Pancreas (tissue), 10 donors: ENCODE measurements at regions of chr6 and their contacts with region 1.

Region 1: GRCh38 chr6:109187399-109188114 is 92.2 kb downstream of the CEP57L1 start:
- DNase-seq: peak in 5 of 6 donors; percentile 35 to 70 (median 56)
- ATAC-seq: peak; percentile 81 to 100 (median 98)
- H3K4me3 ChIP-seq: no peak overlapping the region
- H3K27ac ChIP-seq: no peak overlapping the region
- H3K4me1 ChIP-seq: peaks cover 0 to 13% (median under 1%) of the 10 kb centered on the region in 3 donors
- H3K27me3 ChIP-seq: no peaks in the 10 kb centered on the region
- CTCF ChIP-seq: peak; percentile 68 to 94 (median 80)

Region 2: DNA sequence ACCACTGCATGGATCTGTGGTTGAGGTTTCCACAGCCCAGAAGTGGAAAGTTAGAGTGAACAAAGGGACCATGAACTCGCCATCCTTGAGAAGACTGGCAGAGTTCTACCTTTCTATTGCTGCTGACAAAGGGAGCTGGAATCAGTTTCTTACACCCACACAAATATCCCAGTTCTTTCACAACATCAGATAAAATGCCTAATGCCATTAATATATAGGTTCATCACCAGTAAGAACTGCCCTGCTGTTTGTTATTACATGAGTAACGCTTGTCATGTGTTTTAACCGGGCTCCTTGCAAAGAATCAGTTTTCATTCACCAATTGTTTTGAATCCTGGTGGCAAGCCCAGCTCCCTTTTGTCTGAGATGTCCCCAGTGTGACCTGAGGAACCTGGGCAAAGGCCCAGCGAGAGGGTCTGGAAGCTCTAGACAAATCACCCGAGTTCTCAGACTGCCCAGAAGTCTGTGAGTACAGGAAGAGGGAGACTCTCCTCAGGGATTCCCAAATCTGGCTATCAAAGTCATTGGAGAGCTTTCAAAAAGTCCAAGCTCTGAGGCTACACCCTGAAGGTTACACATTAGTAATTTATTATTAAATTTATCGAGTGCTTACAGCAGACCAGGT is 202.2 kb after region 1 on chr6:
- intact Hi-C with region 1: loop called in 2 of 3 experiments (anchors 5 to 10 kb)
- DNase-seq: no peak
- ATAC-seq: no peak
- H3K4me3 ChIP-seq: no peak overlapping the region
- H3K27ac ChIP-seq: no peak overlapping the region
- H3K4me1 ChIP-seq: peaks cover 0 to 6% (median 2%) of the 10 kb centered on the region in 3 donors
- H3K27me3 ChIP-seq: no peaks in the 10 kb centered on the region
- CTCF ChIP-seq: no peak

Region 3: GRCh38 chr6:109397020-109397419 is 209.5 kb after region 1 on chr6:
- intact Hi-C with region 1: loop called in 1 of 3 experiments (anchors 10 kb)
- DNase-seq: no peak
- ATAC-seq: peak; percentile 40 to 82 (median 74)
- H3K4me3 ChIP-seq: no peak overlapping the region
- H3K27ac ChIP-seq: no peak overlapping the region
- H3K4me1 ChIP-seq: no peaks in the 10 kb centered on the region
- H3K27me3 ChIP-seq: no peaks in the 10 kb centered on the region
- CTCF ChIP-seq: no peak

Region 4: GRCh38 chr6:109482905-109483735 is 295.6 kb after region 1 on chr6 and contains the start of gene ZBTB24:
- intact Hi-C with region 1: no loop called
- DNase-seq: peak; percentile 88 to 96 (median 92)
- ATAC-seq: peak; percentile 95 to 97 (median 96)
- H3K4me3 ChIP-seq: peak within 1 kb of the TSS; percentile 87 to 99 (median 96)
- H3K27ac ChIP-seq: peak within 1 kb of the TSS in 3 of 4 donors; percentile 46 to 76 (median 67)
- H3K4me1 ChIP-seq: peaks cover 9 to 37% (median 10%) of the 10 kb centered on the region in 3 donors
- H3K27me3 ChIP-seq: no peaks in the 10 kb centered on the region
- CTCF ChIP-seq: no peak
- total RNA-seq, gene ZBTB24: 2.3 to 4.3 (median 2.8) TPM